Calu3 (cell line): ENCODE measurements at regions of chr1 and their contacts with region 1.

Region 1: GRCh38 chr1:43227143-43227764 is 42.5 kb upstream of the TMEM125 start:
- DNase-seq: peak; percentile 89
- H3K4me3 Mint-ChIP-seq: no peak overlapping the region
- H3K27ac Mint-ChIP-seq: no peak overlapping the region
- H3K4me1 Mint-ChIP-seq: peaks cover 31% of the 10 kb centered on the region
- H3K27me3 Mint-ChIP-seq: no peaks in the 10 kb centered on the region
- CTCF ChIP-seq: peak; percentile 93

Region 2: GRCh38 chr1:43101061-43101460 is 126.2 kb before region 1 on chr1:
- CTCF ChIA-PET with region 1: no interaction called
- intact Hi-C with region 1: no loop called
- DNase-seq: no peak
- H3K4me3 Mint-ChIP-seq: no peak overlapping the region
- H3K27ac Mint-ChIP-seq: no peak overlapping the region
- H3K4me1 Mint-ChIP-seq: no peaks in the 10 kb centered on the region
- H3K27me3 Mint-ChIP-seq: no peaks in the 10 kb centered on the region
- CTCF ChIP-seq: no peak

Region 3: GRCh38 chr1:43300378-43301094 is 73.3 kb after region 1 on chr1 and contains the start of gene TIE1:
- CTCF ChIA-PET with region 1: no interaction called
- intact Hi-C with region 1: no loop called
- DNase-seq: no peak
- H3K4me3 Mint-ChIP-seq: no peak within 1 kb of the TSS
- H3K27ac Mint-ChIP-seq: no peak within 1 kb of the TSS
- H3K4me1 Mint-ChIP-seq: no peaks in the 10 kb centered on the region
- H3K27me3 Mint-ChIP-seq: peaks cover 32% of the 10 kb centered on the region
- CTCF ChIP-seq: no peak
- total RNA-seq, gene TIE1: not detected in 2 replicates

Region 4: GRCh38 chr1:43383449-43383848 is 156.2 kb after region 1 on chr1:
- CTCF ChIA-PET with region 1: interaction called, 15 read pairs
- intact Hi-C with region 1: loop called (anchors 5 kb)
- DNase-seq: no peak
- H3K4me3 Mint-ChIP-seq: no peak overlapping the region
- H3K27ac Mint-ChIP-seq: no peak overlapping the region
- H3K4me1 Mint-ChIP-seq: peaks cover 10% of the 10 kb centered on the region
- H3K27me3 Mint-ChIP-seq: no peaks in the 10 kb centered on the region
- CTCF ChIP-seq: no peak

Region 5: DNA sequence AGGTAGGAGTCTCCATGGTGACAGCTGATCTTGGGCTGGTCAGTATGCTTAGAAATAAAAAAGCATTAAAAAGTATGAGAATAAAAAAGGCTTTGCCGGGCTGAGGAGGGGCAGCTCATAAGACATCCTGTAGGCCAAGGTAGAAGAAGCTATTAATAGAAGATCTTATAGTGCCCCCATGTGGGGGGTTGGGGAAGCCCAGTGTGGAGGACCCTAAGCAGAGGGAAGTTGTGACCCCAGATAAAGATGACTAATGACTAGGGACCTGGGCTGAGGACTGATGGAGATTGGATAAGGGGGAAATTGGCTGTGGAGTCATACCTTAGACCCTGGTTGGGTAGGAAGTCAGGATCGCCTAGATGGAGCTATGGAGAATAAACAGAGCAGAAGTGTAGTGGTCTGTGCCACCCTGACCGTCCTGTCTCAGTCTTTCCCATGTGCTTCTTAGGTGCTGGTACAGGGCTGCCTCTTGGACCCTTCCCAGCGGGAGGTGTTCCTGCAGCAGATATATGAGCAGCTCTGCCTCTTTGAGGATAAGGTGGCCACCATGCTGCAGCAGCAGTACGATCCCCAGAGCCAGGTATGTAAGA is 187.5 kb after region 1 on chr1:
- CTCF ChIA-PET with region 1: interaction called, 45 read pairs
- intact Hi-C with region 1: loop called (anchors 1 kb)
- DNase-seq: peak; percentile 78
- H3K4me3 Mint-ChIP-seq: no peak overlapping the region
- H3K27ac Mint-ChIP-seq: peak overlapping the region; percentile 5
- H3K4me1 Mint-ChIP-seq: no peaks in the 10 kb centered on the region
- H3K27me3 Mint-ChIP-seq: no peaks in the 10 kb centered on the region
- CTCF ChIP-seq: peak; percentile 42

Region 6: GRCh38 chr1:44002606-44003157 is 775.4 kb after region 1 on chr1:
- CTCF ChIA-PET with region 1: no interaction called
- intact Hi-C with region 1: no loop called
- DNase-seq: no peak
- H3K4me3 Mint-ChIP-seq: no peak overlapping the region
- H3K27ac Mint-ChIP-seq: no peak overlapping the region
- H3K4me1 Mint-ChIP-seq: no peaks in the 10 kb centered on the region
- H3K27me3 Mint-ChIP-seq: no peaks in the 10 kb centered on the region
- CTCF ChIP-seq: peak; percentile 30